ENCODE measurements at regions of chr19 and their contacts with region 1.

Region 1: GRCh38 chr19:5091018-5091683 is 122.2 kb downstream of the KDM4B start:
- DNase-seq: no peak
- ATAC-seq: no peak
- H3K4me3 Mint-ChIP-seq: no peak overlapping the region
- H3K27ac Mint-ChIP-seq: peak overlapping the region; percentile 84
- H3K4me1 Mint-ChIP-seq: peaks cover 4% of the 10 kb centered on the region; the same call in 1 of the 2 replicates
- H3K27me3 Mint-ChIP-seq: no peaks in the 10 kb centered on the region
- CTCF ChIP-seq: no peak

Region 2: GRCh38 chr19:5018224-5019015 is 72.7 kb before region 1 on chr19:
- CTCF ChIA-PET with region 1: no interaction called
- POLR2A ChIA-PET with region 1: no interaction called
- DNase-seq: no peak
- ATAC-seq: no peak
- H3K4me3 Mint-ChIP-seq: no peak overlapping the region
- H3K27ac Mint-ChIP-seq: no peak overlapping the region; the same call in 1 of the 2 replicates
- H3K4me1 Mint-ChIP-seq: 0 out of 2 replicates have a peak, but pooled peaks cover 2% of the 10 kb centered on the region
- H3K27me3 Mint-ChIP-seq: no peaks in the 10 kb centered on the region
- CTCF ChIP-seq: no peak

Region 3: DNA sequence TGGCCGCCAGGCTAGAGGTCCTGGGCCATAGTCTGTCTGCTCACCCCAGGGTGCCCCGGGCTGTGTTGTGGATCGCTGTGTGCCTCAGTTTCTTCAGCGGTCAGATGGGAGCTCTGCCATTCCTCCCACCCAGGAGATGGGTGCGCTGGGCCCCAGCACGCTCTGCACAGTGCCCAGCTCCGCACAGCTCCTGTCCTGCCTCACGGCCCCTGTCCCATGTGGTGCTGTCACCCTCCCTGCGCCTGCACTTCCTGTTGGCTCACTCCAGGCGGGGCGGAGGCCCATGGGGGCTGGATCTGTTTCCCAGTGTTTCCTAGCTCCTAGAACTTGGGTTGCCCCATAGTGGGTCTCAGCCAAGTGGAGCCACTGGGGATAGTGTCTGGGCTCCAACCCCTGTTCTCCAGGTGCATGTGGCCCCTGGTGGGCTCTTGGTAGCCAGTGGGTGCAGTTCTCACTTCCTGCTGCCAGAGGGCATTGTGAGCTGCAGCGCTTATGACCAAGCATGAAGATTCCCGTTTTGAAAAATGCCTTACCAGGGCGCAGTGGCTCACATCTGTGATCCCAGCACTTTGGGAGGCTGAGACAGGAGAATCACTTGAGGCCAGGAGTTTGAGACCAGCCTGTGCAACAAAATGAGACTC is 52.4 kb before region 1 on chr19:
- CTCF ChIA-PET with region 1: interaction called, 19 read pairs
- POLR2A ChIA-PET with region 1: no interaction called
- DNase-seq: peak; percentile 54
- ATAC-seq: peak; percentile 61
- H3K4me3 Mint-ChIP-seq: no peak overlapping the region
- H3K27ac Mint-ChIP-seq: peak overlapping the region; percentile 19; the same call in 1 of the 2 replicates
- H3K4me1 Mint-ChIP-seq: no peaks in the 10 kb centered on the region
- H3K27me3 Mint-ChIP-seq: no peaks in the 10 kb centered on the region
- CTCF ChIP-seq: peak; percentile 26; the same call in 1 of the 2 replicates

Region 4: DNA sequence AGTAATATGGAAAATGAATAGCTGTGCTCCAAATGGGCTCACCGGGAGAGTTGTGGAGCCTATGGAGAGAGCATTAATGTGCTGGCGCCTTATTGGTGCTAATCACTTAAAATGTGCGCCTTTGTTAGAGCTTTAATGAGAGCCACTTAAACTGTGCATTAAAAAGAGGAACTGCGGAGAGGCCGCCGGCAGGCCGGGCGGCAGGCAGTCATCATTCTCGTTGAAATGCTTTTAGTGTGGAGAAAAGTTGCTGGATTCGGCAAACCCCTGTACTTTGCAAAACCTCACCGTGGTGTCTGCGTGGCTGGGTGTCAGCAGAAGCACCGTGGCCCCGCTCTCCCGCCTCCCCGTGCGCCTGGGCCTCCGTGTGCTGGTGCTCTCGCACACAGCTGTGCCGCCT is 16.7 kb before region 1 on chr19:
- CTCF ChIA-PET with region 1: interaction called, 28 read pairs
- POLR2A ChIA-PET with region 1: no interaction called
- DNase-seq: no peak
- ATAC-seq: no peak
- H3K4me3 Mint-ChIP-seq: no peak overlapping the region
- H3K27ac Mint-ChIP-seq: peak overlapping the region; percentile 95
- H3K4me1 Mint-ChIP-seq: peaks cover 35% of the 10 kb centered on the region
- H3K27me3 Mint-ChIP-seq: no peaks in the 10 kb centered on the region
- CTCF ChIP-seq: no peak

Region 5: GRCh38 chr19:5112681-5113557 is 21.8 kb after region 1 on chr19:
- CTCF ChIA-PET with region 1: interaction called, 48 read pairs
- POLR2A ChIA-PET with region 1: no interaction called
- DNase-seq: no peak
- ATAC-seq: no peak
- H3K4me3 Mint-ChIP-seq: no peak overlapping the region
- H3K27ac Mint-ChIP-seq: peak overlapping the region; percentile 83
- H3K4me1 Mint-ChIP-seq: peaks cover 30% of the 10 kb centered on the region
- H3K27me3 Mint-ChIP-seq: no peaks in the 10 kb centered on the region
- CTCF ChIP-seq: no peak

Region 6: DNA sequence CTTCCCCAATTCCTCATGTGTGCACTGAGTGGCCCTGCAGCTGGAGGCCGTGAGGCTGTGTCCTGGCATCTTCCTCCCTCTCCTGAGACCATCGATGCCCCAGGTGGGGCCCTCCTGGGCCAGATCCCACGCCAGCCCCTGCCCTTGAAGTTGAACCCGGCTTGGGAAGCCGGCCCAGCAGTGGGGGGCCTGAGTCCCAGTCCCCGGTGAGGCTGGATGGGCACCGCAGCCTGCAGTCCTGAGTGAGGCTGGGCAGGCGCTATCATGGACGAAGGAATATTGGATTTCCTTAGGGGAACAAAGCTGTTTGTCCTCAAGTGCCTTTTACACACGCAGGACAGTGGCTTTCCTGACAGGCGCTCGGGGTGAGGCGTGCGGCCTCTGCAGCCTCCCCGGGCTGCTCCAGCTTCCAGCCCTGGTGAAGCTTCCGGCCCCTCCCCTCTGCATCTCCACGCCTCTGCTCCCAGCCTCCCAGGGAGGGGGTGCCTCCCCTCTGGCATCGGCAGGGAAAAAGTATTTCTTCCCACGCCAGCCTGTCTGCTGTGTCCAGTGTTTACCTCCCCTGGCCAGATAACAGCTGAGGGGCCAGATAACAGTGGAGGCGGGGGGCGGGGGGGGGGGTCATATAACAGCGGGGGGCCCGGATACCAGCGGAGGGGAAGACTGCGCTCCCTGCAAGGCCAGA is 37.2 kb after region 1 on chr19:
- CTCF ChIA-PET with region 1: interaction called, 15 read pairs
- POLR2A ChIA-PET with region 1: interaction called, 3 read pairs
- DNase-seq: no peak
- ATAC-seq: peak; percentile 9; the same call in 1 of the 2 replicates
- H3K4me3 Mint-ChIP-seq: no peak overlapping the region
- H3K27ac Mint-ChIP-seq: no peak overlapping the region
- H3K4me1 Mint-ChIP-seq: peaks cover 48% of the 10 kb centered on the region
- H3K27me3 Mint-ChIP-seq: no peaks in the 10 kb centered on the region
- CTCF ChIP-seq: no peak

Region 7: GRCh38 chr19:5154129-5154798 is 63.1 kb after region 1 on chr19:
- CTCF ChIA-PET with region 1: interaction called, 20 read pairs
- POLR2A ChIA-PET with region 1: no interaction called
- DNase-seq: peak; percentile 90
- ATAC-seq: peak; percentile 87
- H3K4me3 Mint-ChIP-seq: no peak overlapping the region
- H3K27ac Mint-ChIP-seq: no peak overlapping the region
- H3K4me1 Mint-ChIP-seq: peaks cover 13% of the 10 kb centered on the region
- H3K27me3 Mint-ChIP-seq: peaks cover 5% of the 10 kb centered on the region
- CTCF ChIP-seq: peak; percentile 63

Measured in WTC11 (cell line).